ENCODE measurements at regions of chr21 and their contacts with region 1.

Region 1: DNA sequence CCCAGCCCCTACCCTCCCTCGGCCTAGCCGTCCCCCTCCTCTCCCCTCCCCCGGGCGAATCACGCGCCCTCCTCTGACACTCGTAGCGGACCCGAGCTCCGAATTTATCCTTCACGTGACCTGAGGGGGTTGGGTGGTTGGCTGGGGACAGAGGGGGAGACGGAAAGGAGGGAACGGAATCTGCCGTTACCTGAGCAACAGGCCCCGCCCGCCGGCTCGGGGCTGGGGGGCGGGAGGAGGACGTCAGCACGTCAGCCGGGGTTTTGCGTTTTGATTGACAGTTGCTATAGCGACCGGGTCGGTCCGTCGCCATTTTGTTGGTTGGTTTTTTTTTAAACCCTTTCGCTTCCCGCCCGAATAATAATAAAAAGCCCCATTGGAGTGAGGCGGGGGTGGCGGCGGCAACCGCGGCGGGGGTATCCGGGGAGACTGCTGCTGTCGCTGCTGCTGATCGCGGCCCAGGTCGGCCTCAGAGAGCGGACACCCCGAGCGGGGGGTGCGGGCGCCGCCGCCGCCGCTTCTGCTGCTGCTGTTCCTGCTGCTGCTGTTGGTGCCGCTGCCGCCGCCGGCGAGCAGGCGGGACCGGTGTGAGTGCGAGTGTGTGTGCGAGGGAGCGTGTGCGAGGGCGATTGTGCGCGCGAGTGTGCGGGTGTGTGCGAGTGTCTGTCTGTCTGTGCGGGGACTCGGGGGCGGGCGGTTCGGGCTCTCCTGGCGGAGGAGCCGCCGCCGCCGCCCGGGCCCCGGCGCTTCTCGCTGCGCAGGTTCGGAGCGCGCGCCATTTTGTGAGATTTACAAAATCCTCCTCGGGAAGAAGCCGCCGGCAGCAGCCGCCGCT is at the start of gene DYRK1A:
- DNase-seq: peak; percentile 99
- ATAC-seq: peak; percentile 97
- H3K4me3 ChIP-seq: peak within 1 kb of the TSS; percentile 96 to 98
- H3K27ac ChIP-seq: peak within 1 kb of the TSS; percentile 99
- H3K4me1 ChIP-seq: peaks cover 0 to 1% of the 10 kb centered on the region in 2 donors
- H3K27me3 ChIP-seq: no peaks in the 10 kb centered on the region
- total RNA-seq, gene DYRK1A: 70.0 to 76.6 TPM

Region 2: DNA sequence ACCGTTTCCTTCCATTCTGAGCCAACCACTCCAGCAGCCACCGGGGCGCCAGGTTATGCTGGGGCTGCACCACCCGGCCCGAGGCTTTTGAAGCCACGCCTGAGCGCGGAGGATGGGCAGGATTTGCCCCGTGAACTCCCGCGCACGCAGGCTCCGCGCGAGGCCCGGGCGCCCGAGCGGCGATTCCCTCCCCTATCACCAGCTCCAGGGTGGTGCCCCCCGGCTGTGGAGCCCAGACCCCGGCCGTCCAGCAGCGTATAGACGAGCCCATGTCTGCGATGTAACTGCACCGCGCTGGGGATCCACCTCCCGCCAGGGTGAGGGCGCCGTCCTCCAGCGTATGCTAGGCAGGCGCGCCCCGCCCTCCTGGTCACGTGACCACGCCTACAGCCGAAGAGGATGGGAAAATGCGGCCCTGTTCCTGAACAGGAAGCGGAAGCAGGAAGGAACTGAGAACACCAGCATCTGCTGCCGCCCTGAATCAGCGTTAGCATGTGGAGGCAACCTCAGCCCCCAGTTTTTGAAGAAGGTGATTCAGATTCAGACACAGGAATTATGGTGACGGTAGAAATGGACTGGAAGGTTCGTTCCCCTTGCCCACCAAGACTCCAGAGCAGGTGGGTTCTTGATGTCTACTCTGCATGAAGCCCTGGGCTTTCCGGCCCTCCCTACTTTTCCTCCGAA is 145.6 kb before region 1 on chr21:
- intact Hi-C with region 1: loop called in 1 of 2 experiments (anchors 5 kb)
- DNase-seq: peak; percentile 97 to 98
- ATAC-seq: peak; percentile 97
- H3K4me3 ChIP-seq: peak overlapping the region; percentile 38 to 77
- H3K27ac ChIP-seq: peak overlapping the region in 1 of 2 donors; percentile 64
- H3K4me1 ChIP-seq: no peaks in the 10 kb centered on the region
- H3K27me3 ChIP-seq: no peaks in the 10 kb centered on the region

Region 3: DNA sequence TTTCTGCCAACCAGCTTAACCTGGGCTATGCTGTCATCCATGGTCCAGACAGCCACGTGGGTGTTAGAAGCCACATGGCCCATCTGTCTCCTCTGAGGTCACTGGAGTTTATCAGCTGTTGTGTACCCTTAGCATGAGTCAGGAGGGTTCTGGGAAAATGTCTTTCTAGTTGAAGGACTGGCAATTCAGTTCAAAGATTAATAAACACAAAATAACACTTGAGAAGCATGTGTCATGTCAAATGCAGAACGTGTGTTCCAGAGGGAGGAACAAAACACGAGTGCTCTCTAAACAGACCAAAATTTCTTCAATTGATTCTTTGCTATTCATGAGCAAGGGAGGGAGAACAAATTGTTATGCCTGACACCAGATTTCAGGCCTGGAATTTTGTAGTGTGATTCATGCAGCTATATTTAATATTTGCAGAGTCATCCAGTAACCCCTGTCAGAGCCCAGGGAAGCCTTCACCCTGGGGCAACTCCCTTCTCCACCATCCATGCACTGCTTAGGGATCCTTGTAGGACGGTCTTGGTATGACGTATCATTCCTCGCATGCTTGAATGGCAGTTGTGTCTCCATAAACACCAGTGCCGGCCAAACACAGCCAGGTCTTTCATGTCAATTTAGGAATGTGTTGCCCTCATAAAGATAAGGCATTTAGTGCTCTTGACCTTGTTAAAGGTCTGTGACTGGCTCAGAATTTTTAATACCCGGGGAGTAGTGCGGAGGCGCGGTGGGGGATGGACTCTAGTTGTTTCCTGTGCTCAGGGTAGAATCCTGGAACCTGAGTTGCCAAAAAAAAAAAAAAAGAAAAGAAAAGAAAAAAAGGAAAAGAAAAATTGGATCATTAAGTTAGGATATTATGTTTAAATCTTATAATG is 27.8 kb before region 1 on chr21:
- intact Hi-C with region 1: loop called (anchors 2 kb)
- DNase-seq: peak; percentile 59 to 79
- ATAC-seq: peak; percentile 87
- H3K4me3 ChIP-seq: no peak overlapping the region
- H3K27ac ChIP-seq: peak overlapping the region; percentile 91 to 97
- H3K4me1 ChIP-seq: no peaks in the 10 kb centered on the region
- H3K27me3 ChIP-seq: no peaks in the 10 kb centered on the region

Region 4: GRCh38 chr21:37463083-37463801 is 96.5 kb after region 1 on chr21:
- intact Hi-C with region 1: loop called in 1 of 2 experiments (anchors 5 kb)
- DNase-seq: no peak
- ATAC-seq: peak; percentile 85
- H3K4me3 ChIP-seq: peak overlapping the region in 1 of 2 donors; percentile 53
- H3K27ac ChIP-seq: no peak overlapping the region
- H3K4me1 ChIP-seq: peaks cover 2 to 23% of the 10 kb centered on the region in 2 donors
- H3K27me3 ChIP-seq: no peaks in the 10 kb centered on the region

Measured in aorta (tissue), 5 donors.